Activated CD8-positive, alpha-beta memory T cell treated with anti-CD3 and anti-CD28 coated beads, Interleukin-2, amount 10 ng/mL, durations not matched to agents 7 days and 5 days (primary cell): ENCODE measurements at regions of chr20 and their contacts with region 1.

Region 1: GRCh38 chr20:3218307-3218988 is 9.2 kb downstream of the ITPA start:
- DNase-seq: peak; percentile 82
- ATAC-seq: peak; percentile 94
- H3K4me3 Mint-ChIP-seq: no peak overlapping the region
- H3K27ac Mint-ChIP-seq: no peak overlapping the region
- H3K4me1 Mint-ChIP-seq: peaks cover 11% of the 10 kb centered on the region
- H3K27me3 Mint-ChIP-seq: no peaks in the 10 kb centered on the region

Region 2: DNA sequence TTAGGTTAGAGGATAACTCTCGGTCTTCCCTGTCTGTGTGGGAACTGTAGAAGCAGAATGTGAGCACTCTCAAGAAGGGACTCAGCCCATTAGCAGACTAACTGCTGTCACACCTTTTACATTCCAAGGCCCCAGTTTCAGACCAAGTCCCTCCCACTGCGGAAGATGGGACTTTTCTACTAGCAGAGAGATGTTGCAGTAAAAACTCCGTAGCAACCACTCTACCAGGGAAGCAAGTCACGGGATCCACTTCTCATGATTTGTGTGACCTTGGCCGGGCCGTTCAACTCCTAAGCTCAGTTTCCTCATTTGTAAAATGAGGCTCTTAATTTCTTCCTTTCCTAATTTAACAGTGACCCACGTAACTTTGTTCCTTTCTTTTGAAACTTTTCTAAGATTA is 97.7 kb after region 1 on chr20:
- CTCF ChIA-PET with region 1: interaction called, 21 read pairs
- DNase-seq: no peak
- ATAC-seq: no peak
- H3K4me3 Mint-ChIP-seq: no peak overlapping the region
- H3K27ac Mint-ChIP-seq: no peak overlapping the region
- H3K4me1 Mint-ChIP-seq: no peaks in the 10 kb centered on the region
- H3K27me3 Mint-ChIP-seq: no peaks in the 10 kb centered on the region

Region 3: GRCh38 chr20:3502878-3503277 is 284.4 kb after region 1 on chr20:
- CTCF ChIA-PET with region 1: no interaction called
- DNase-seq: no peak
- ATAC-seq: no peak
- H3K4me3 Mint-ChIP-seq: no peak overlapping the region
- H3K27ac Mint-ChIP-seq: no peak overlapping the region
- H3K4me1 Mint-ChIP-seq: peaks cover 2% of the 10 kb centered on the region
- H3K27me3 Mint-ChIP-seq: no peaks in the 10 kb centered on the region

Region 4: DNA sequence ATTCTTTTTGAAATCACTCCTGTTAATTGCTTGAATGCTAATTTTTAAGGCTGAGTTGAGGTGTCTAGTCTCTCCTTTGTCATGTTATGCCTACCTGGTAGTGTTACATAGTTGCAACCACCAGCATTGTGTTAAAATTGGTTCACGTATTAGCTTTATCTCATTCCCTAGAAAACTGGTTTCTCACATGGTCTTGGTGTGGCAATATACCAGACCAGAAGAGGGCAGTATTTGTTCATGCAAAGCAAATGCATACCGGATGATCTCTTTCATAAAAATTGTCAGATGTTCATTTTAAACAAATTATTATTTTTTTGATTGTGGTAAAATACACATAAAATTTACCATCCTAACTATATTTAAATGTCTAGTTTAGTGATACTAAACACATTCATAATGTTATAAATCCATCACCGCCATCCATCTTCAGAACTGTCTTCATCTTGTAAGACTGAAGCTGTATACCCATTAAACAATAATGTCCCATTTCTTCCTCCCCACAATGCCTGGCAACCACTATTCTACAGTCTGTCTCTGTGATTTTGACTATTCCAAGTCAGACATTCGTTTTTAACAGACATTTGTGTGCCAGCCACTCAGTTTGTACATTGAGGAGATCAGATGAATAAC is 345.2 kb after region 1 on chr20:
- CTCF ChIA-PET with region 1: no interaction called
- DNase-seq: no peak
- ATAC-seq: peak; percentile 47
- H3K4me3 Mint-ChIP-seq: no peak overlapping the region
- H3K27ac Mint-ChIP-seq: no peak overlapping the region
- H3K4me1 Mint-ChIP-seq: no peaks in the 10 kb centered on the region
- H3K27me3 Mint-ChIP-seq: no peaks in the 10 kb centered on the region